H1 (cell line): ENCODE measurements at regions of chr16 and their contacts with region 1.

Region 1: DNA sequence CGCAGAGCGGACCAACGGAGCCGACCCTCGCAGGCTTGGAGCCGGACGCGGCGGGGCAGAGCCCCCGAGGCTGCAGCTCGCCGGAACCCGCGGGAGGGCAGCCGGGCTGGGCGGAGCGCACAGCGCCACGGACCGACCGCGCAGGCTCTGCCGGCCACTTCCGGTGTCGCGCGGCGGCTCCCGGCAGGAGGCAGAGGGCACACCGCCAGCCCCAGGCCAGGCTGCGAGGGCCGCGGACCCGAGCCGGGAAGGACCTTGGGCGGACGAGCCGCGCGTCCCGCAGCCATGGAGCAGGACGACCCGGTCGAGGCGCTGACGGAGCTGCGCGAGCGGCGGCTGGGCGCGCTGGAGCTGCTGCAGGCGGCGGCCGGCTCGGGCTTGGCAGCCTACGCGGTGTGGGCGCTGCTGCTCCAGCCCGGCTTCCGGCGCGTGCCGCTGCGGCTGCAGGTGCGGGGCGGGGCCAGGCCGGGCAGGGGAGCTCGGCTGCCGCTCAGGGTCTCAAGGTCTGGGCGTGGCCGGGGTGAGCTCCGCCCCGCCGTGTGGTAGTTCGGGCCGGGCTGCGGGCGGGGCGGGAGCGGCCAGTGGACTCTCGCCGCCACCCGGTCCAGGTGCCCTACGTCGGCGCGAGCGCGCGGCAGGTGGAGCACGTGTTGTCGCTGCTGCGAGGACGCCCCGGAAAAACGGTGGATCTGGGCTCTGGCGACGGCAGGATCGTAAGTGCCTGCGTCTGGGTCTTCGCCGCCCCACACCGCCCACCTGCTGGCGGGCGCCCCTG is at the start of gene ANTKMT:
- DNase-seq: peak in 1 of 2 experiments; percentile 93
- H3K4me3 ChIP-seq: peak within 1 kb of the TSS; percentile 75 to 77 (median 76)
- H3K27ac ChIP-seq: peak within 1 kb of the TSS; percentile 89
- H3K4me1 ChIP-seq: peaks cover 0 to 22% (median 14%) of the 10 kb centered on the region in 4 experiments; a peak in 5 of 7 replicates
- H3K27me3 ChIP-seq: peaks cover 0 to 26% (median 6%) of the 10 kb centered on the region in 4 experiments; a peak in 5 of 7 replicates
- CTCF ChIP-seq: 0 out of 4 replicates have a peak, but pooled peaks of 1 of the 3 experiments have one; percentile 10
- EP300 ChIP-seq: no peak
- POLR2A ChIP-seq: peak in 1 of 2 experiments; percentile 88; a peak in 2 of 3 replicates
- RAD21 ChIP-seq: peak in 1 of 2 experiments; percentile 2; a peak in 1 of 4 replicates
- total RNA-seq, gene ANTKMT: 26.5 and 31.8 TPM in 2 replicates

Region 2: DNA sequence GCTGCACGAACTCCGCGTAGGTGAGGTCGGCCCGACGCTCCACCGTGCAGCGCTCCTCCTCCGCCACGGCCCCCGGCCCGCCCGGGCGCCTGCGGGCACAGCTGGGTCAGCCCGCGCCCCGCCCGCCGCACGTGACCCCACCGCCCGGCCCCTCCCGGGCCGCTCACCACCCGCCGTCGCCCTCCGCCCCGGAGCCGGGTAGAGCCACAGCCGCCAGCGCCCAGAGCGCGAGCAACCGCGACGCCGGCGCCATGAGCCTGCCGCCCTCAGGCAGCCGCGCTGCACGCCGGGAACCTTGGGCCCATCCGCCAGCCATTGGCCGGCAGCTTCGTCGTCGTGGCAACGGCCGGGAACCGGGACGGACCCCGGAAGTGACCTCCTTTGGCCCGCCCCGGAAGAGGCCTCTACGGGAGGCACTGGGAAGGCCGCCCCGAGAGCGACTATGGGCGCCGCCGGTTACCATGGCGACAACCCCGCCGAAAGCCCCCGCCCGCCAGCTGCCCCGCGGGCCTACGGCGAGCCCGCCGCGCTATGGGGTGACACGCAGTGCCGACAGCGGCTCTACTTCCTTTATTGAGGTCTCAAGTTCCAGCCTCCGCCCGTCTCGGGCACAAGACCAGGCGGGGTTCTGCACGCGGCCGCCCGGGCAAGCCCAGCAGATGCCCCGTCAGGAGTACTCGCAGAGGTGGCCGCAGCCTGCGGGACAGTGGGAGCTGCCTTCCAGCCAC is 36.9 kb before region 1 on chr16 and contains the start of gene JMJD8:
- CTCF ChIA-PET with region 1: interaction called, 7 read pairs
- POLR2A ChIA-PET with region 1: interaction called, 13 read pairs
- DNase-seq: peak; percentile 81 to 98
- H3K4me3 ChIP-seq: peak within 1 kb of the TSS; percentile 62 to 81 (median 74)
- H3K27ac ChIP-seq: peak within 1 kb of the TSS; percentile 73
- H3K4me1 ChIP-seq: peaks cover 0 to 18% (median 13%) of the 10 kb centered on the region in 4 experiments; a peak in 5 of 7 replicates
- H3K27me3 ChIP-seq: no peaks in the 10 kb centered on the region; a peak in 1 of 7 replicates
- CTCF ChIP-seq: no peak
- EP300 ChIP-seq: no peak
- POLR2A ChIP-seq: peak in 1 of 2 experiments; percentile 92; a peak in 2 of 3 replicates
- RAD21 ChIP-seq: no peak
- total RNA-seq, gene JMJD8: 46.4 and 49.0 TPM in 2 replicates

Region 3: GRCh38 chr16:689175-689901 is 31.8 kb before region 1 on chr16:
- CTCF ChIA-PET with region 1: interaction called, 7 read pairs
- POLR2A ChIA-PET with region 1: interaction called, 13 read pairs
- DNase-seq: no peak
- H3K4me3 ChIP-seq: peak overlapping the region; percentile 76 to 90 (median 82)
- H3K27ac ChIP-seq: no peak overlapping the region
- H3K4me1 ChIP-seq: peaks cover 0 to 16% (median 7%) of the 10 kb centered on the region in 4 experiments; a peak in 5 of 7 replicates
- H3K27me3 ChIP-seq: peaks cover 0 to 29% (median 13%) of the 10 kb centered on the region in 4 experiments; a peak in 5 of 7 replicates
- CTCF ChIP-seq: no peak
- EP300 ChIP-seq: no peak
- POLR2A ChIP-seq: no peak
- RAD21 ChIP-seq: no peak

Region 4: DNA sequence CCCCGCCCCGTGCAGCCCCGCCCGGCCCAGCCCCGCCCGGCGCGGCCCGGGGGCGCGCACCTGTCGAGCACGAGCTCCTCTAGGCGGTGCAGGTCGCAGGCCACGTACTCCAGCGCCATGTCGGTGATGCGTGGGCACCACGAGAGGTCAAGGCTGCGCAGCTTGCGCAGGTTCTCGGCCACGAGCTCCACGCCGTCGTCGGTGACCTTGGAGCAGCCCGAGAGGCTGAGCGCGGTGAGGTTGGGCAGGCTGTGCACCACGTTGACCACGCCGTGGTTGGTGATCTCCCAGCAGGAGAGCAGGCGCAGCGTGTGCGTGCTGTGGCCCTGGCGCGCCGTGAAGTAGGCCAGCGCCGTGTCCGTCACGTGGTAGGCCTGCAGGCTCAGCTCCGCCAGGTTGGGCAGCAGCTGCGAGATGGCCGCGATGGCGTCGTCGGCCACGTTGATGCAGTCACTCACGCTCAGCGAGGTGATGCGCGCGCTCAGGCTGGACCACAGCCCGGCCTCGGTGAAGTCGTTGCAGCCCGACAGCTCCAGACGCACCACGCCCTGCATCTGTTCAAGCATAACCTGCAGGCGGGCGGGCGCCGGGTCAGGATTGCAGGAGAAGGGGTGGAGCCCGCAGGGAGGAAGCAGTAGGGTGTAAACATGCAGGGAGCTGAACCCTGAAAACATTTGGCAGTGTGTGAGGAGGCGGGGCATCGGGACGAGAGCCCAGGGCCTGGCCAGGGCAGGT is 25.7 kb before region 1 on chr16:
- CTCF ChIA-PET with region 1: interaction called, 977 read pairs
- POLR2A ChIA-PET with region 1: interaction called, 30 read pairs
- DNase-seq: peak in 1 of 2 experiments; percentile 77
- H3K4me3 ChIP-seq: peak overlapping the region; percentile 47 to 73 (median 52)
- H3K27ac ChIP-seq: no peak overlapping the region
- H3K4me1 ChIP-seq: peaks cover 0 to 13% (median 9%) of the 10 kb centered on the region in 4 experiments; a peak in 4 of 7 replicates
- H3K27me3 ChIP-seq: peaks cover 8 to 76% (median 53%) of the 10 kb centered on the region in 4 experiments
- CTCF ChIP-seq: no peak
- EP300 ChIP-seq: no peak
- POLR2A ChIP-seq: no peak
- RAD21 ChIP-seq: no peak

Region 5: DNA sequence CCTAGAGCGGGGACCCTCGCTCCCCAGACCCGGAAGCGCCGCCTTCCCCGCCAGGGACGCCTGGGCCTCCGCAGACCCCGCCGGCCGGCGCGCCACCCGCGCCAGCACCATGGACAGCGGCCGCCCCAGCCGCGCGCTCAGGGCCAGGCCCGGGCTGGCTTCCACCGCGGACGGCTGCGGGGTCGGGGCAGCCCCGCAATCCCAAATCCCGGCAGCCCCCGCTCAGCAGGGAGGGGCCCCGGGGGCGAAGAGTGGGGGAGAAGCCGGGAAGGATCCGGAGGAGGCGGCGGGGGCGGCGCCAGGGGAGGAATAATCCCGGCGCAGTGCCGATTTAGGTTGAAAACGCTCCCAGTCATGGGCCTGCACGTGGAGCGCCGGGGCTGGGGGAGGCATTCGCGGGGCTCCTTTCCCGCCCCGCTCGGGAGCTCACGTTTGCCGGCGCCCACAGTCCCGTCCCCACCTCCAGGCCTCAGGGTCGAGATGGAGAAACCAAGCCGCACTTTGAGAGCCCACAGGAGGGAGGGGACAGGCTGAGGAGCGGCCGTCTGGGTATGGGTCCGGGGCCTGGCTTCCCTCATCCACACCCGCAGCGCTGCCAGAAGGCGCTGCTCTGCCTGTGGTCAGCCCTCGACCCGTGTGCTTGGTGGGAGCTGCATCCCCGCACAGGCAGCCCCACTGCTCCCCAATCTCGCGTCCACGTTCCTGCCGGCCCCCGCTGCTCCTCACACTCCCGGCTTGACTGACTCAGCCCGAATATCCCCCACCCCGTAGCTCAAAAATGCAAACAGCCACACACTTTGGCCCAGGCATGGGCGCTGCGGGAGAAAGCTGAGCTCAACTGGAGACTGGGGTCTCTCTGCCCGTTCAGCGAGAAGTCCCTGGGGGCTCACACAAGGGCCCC is 20.2 kb before region 1 on chr16:
- CTCF ChIA-PET with region 1: interaction called, 977 read pairs
- POLR2A ChIA-PET with region 1: interaction called, 30 read pairs
- DNase-seq: peak in 1 of 2 experiments; percentile 92
- H3K4me3 ChIP-seq: peak overlapping the region in 1 of 4 experiments; percentile 33; a peak in 2 of 8 replicates
- H3K27ac ChIP-seq: no peak overlapping the region
- H3K4me1 ChIP-seq: peaks cover 0 to 6% (median 1%) of the 10 kb centered on the region in 4 experiments; a peak in 3 of 7 replicates
- H3K27me3 ChIP-seq: peaks cover 45 to 80% (median 72%) of the 10 kb centered on the region in 4 experiments
- CTCF ChIP-seq: 0 out of 4 replicates have a peak, but pooled peaks of 1 of the 3 experiments have one; percentile 3
- EP300 ChIP-seq: no peak
- POLR2A ChIP-seq: no peak
- RAD21 ChIP-seq: peak in 1 of 2 experiments; percentile 1; a peak in 1 of 4 replicates

Region 6: DNA sequence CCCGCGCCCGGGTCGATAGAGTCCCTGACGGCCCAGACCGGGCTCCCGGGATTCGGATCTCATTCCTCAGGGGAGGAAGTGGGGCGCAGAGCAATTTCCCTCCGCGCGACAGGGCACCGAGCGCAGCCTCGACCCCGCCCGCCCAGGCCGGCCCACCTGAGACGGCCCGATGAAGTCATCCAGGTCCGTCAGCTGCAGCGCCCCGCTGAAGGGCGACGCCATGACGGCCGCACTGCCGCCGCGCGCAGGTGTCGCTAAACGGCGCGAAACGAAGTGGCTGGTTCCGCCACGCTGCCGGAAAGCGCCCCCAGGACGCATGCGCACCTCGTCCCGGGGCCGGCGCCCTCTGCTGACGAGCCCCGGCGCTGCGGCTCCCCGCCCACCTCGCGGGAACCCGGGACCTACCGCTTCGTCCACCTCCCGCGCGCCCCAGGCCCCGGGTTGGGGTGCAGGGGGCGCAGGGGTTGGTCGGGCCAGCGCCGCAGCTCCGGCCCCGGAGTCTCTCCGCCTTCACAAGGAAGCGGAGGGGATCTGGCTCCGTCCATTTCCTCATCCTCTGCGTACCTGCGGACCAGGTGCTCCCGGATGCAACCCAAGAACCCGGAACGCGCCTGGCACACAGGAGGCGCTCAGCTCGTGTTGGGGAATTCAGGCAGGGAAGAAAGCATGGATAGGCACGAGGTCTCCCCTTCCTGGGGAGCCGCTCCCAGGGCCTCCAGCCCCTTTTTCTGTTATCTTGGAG is 19.8 kb after region 1 on chr16 and contains the start of gene CIAO3:
- CTCF ChIA-PET with region 1: interaction called, 977 read pairs
- POLR2A ChIA-PET with region 1: interaction called, 353 read pairs
- DNase-seq: peak in 1 of 2 experiments; percentile 99
- H3K4me3 ChIP-seq: peak within 1 kb of the TSS; percentile 62 to 90 (median 81)
- H3K27ac ChIP-seq: peak within 1 kb of the TSS; percentile 84
- H3K4me1 ChIP-seq: peaks cover 0 to 9% (median 4%) of the 10 kb centered on the region in 4 experiments; a peak in 5 of 7 replicates
- H3K27me3 ChIP-seq: no peaks in the 10 kb centered on the region
- CTCF ChIP-seq: peak; percentile 72 to 91 (median 82); a peak in 3 of 4 replicates
- EP300 ChIP-seq: no peak
- POLR2A ChIP-seq: peak in 1 of 2 experiments; percentile 66; a peak in 1 of 3 replicates
- RAD21 ChIP-seq: no peak; a peak in 2 of 4 replicates
- total RNA-seq, gene CIAO3: 20.4 and 21.0 TPM in 2 replicates

Region 7: DNA sequence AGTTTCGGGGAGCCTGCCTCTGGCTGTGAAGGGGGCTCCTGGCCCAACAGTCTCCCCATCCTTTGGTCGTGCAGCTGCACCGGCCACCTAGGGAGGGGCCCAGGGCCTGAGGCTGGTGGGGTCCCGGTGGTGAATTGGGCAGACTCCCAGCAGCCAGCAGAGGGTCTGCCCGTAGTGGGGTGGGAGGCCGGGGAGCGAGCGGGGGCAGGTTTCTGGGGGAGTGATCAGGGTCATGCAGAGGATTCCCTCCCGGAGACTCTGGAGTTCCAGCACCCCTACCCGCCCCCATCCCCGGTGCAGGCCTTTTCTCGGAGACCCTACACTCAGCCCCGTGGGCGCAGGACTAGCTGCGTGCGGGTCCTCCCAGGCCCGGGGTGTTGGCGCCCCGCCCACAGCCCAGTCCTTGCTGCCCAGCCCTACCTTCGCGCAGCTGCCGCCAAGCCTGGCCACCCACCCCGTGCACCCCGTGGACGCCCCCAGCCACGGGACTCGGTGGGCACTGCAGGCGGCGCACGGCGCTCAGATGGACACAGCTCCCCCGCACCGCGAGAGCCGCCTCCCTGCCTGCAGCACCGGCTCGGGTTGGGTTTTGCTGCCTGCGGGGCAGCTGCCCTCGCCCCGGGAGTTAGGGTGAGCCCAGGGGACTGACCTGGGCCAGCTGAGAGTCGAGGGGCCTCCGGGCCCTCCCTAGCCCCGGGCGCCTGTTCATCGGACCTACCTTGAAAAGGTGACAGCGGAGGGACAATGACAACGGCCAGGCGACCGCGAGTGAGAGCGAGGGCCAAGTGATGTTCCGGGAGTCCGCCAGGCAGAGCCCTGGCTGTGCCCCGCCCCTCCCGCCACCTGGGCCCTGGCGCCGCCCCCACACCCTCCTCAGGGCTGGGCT is 79.0 kb after region 1 on chr16 and contains the start of gene GNG13:
- CTCF ChIA-PET with region 1: interaction called, 9 read pairs
- POLR2A ChIA-PET with region 1: interaction called, 55 read pairs
- DNase-seq: peak in 1 of 2 experiments; percentile 84
- H3K4me3 ChIP-seq: peak within 1 kb of the TSS; percentile 5 to 61 (median 20); a peak in 6 of 8 replicates
- H3K27ac ChIP-seq: no peak within 1 kb of the TSS
- H3K4me1 ChIP-seq: peaks cover 0 to 17% (median 3%) of the 10 kb centered on the region in 4 experiments; a peak in 4 of 7 replicates
- H3K27me3 ChIP-seq: peaks cover 1 to 42% (median 28%) of the 10 kb centered on the region in 4 experiments; a peak in 6 of 7 replicates
- CTCF ChIP-seq: no peak
- EP300 ChIP-seq: no peak
- POLR2A ChIP-seq: no peak
- RAD21 ChIP-seq: no peak
- total RNA-seq, gene GNG13: not detected in 2 replicates